ENCODE measurements at regions of chr4 and their contacts with region 1.

Region 1: DNA sequence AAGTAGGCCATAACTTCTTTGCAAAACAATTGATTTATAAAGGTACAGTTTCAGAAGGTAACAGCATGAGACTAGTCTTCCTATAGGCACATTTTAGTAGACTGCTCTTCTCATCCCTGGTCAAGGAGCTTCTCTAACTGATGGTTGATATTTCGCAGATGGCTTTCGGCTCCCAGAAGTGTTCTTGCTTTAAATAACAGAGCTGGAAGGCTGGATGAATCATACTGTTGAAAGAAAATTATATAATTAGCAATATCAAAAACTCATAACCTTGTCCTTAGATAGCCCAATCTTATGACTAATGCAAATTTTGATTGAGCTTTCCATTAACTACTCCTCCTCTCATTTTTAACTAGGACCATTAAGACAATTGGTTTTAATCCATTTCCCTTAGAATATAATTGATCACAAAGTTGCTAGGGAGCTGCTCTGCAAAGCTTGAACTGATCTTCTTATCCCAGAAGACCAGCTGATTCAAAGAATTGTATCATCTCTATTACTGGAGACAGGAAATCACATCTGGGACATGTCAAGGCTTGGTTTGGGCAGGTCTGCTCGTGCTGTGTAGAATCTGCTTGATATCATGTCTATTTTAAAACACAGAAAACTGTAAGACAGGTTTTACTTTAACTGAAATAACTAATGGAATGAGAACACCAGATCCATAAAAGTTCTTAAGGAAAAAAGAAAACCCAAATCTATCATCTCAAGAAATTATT is 38.6 kb downstream of the CENPU start:
- DNase-seq: no peak
- ATAC-seq: no peak
- H3K4me3 ChIP-seq: no peak overlapping the region
- H3K27ac ChIP-seq: no peak overlapping the region
- H3K4me1 ChIP-seq: no peaks in the 10 kb centered on the region
- H3K27me3 ChIP-seq: no peaks in the 10 kb centered on the region
- CTCF ChIP-seq: no peak
- EP300 ChIP-seq: no peak
- POLR2A ChIP-seq: no peak
- RAD21 ChIP-seq: no peak

Region 2: GRCh38 chr4:183636923-183637322 is 1058.4 kb before region 1 on chr4:
- CTCF ChIA-PET with region 1: no interaction called
- POLR2A ChIA-PET with region 1: no interaction called
- in situ Hi-C with region 1: no loop called
- intact Hi-C with region 1: no loop called
- DNase-seq: no peak
- ATAC-seq: no peak
- H3K4me3 ChIP-seq: no peak overlapping the region
- H3K27ac ChIP-seq: no peak overlapping the region
- H3K4me1 ChIP-seq: peaks cover 8% of the 10 kb centered on the region; the same call in 1 of the 2 replicates
- H3K27me3 ChIP-seq: no peaks in the 10 kb centered on the region
- CTCF ChIP-seq: no peak
- EP300 ChIP-seq: no peak
- POLR2A ChIP-seq: no peak
- RAD21 ChIP-seq: no peak

Region 3: DNA sequence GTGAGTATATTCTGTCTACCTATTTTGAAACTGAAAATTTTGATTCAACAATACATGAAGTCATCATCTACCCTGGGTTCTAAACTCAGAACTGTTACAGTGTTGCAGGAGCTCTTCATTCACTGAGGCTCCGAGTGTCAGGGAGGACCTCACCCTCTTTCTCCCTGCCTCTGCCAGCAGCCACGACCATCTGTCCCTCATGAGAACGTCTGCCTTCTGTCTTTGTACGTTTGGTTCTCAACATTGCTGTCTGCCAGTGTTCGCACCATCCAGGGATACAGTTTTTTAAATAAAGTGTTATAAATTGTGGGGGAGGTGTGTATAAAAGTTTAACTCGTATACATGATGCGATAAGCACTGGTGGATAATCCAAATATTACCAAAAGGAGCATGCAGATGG is 980.7 kb before region 1 on chr4:
- CTCF ChIA-PET with region 1: no interaction called
- POLR2A ChIA-PET with region 1: no interaction called
- in situ Hi-C with region 1: no loop called
- intact Hi-C with region 1: loop called (anchors 5 kb)
- DNase-seq: no peak
- ATAC-seq: no peak
- H3K4me3 ChIP-seq: no peak overlapping the region
- H3K27ac ChIP-seq: no peak overlapping the region
- H3K4me1 ChIP-seq: peaks cover 10% of the 10 kb centered on the region; the same call in 1 of the 2 replicates
- H3K27me3 ChIP-seq: no peaks in the 10 kb centered on the region
- CTCF ChIP-seq: no peak
- EP300 ChIP-seq: no peak
- POLR2A ChIP-seq: no peak
- RAD21 ChIP-seq: no peak

Region 4: DNA sequence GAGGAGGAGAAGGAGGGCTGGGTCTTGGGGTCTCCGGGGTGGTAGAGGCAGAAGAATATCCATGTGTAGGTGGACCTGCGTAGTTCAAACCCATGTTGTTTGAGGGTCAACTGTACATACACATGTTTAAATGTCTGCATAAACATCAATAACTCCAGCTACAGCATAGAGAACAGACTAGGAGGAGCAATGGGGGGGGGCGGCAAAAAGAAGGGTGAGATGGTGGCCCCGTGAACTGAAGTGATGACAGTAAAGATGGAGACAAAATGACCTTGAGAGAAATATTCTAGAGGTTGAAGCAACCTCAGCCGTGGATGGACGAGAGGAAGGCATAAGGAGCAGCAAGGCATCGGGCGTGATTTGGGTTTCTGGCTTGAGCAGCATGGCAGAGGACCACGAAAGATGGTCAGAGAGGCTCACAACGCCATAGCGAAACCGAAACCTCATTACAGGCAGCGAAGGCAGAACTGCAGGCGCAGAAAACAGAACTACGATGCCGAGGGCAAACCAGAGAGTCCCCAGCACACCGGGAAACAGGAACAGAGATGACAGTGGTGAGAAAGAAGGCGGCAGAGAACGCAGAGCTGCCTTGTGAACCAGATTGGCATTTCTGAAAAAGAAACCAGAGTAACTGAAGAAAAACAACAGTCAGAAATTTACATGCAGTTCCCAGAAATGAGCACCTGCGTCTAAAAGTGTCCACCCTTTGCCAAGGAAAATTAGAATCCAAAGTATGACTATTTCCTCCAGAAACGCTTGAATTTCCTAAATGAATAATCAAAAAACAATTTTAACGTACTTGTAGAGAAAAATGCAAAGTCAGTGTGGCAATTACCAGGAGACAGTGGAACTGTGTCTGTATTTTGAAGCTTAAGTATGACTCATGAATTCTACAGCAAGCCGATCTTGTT is 427.4 kb before region 1 on chr4:
- CTCF ChIA-PET with region 1: no interaction called
- POLR2A ChIA-PET with region 1: no interaction called
- in situ Hi-C with region 1: no loop called
- intact Hi-C with region 1: no loop called
- DNase-seq: peak; percentile 43
- ATAC-seq: peak; percentile 74
- H3K4me3 ChIP-seq: peak overlapping the region; percentile 60 to 78 (median 75)
- H3K27ac ChIP-seq: peak overlapping the region; percentile 51
- H3K4me1 ChIP-seq: peaks cover 34% of the 10 kb centered on the region
- H3K27me3 ChIP-seq: peaks cover 0 to 5% of the 10 kb centered on the region in 2 experiments; a peak in 1 of 5 replicates
- CTCF ChIP-seq: no peak
- EP300 ChIP-seq: no peak
- POLR2A ChIP-seq: no peak
- RAD21 ChIP-seq: no peak